Activated CD4-positive, alpha-beta memory T cell treated with anti-CD3 and anti-CD28 coated beads for 36 hours (primary cell): ENCODE measurements at regions of chr6 and their contacts with region 1.

Region 1: DNA sequence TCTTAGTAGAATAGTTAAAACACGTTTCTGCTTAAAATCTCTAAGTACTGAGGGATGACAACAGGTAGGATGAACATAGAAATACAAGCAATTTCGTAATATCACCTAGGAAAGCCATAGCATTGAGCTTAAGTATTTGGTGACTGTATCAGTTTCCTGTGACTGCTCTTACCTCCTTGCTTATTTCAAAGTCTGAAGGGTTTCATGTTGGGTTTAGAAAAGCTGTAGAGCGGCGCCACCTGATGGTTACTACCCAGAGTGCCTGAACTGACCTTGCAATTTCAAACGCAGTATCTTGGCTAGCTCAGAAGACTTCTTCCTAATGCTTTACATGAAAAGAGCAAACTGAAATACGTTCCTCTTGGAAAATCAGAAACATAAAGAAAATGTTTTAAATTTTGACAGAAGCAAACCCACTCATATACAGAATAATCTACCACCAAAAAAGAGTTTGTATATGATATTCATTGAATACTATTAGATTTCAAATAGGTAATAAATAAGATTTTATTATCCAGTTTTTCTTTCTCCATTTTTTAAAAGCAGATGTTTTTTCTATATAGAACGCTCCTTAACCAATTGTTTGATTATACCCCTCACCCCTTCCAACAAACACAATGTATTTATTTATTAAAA is 82.3 kb upstream of the RIPOR2 start:
- DNase-seq: peak; percentile 90
- H3K4me3 Mint-ChIP-seq: peak overlapping the region; percentile 42
- H3K27ac Mint-ChIP-seq: peak overlapping the region; percentile 86
- H3K4me1 Mint-ChIP-seq: peaks cover 69% of the 10 kb centered on the region
- H3K27me3 Mint-ChIP-seq: no peaks in the 10 kb centered on the region

Region 2: GRCh38 chr6:24581084-24581669 is 436.9 kb before region 1 on chr6:
- CTCF ChIA-PET with region 1: interaction called, 8 read pairs
- POLR2A ChIA-PET with region 1: no interaction called
- intact Hi-C with region 1: loop called (anchors 1 kb)
- DNase-seq: peak; percentile 85
- H3K4me3 Mint-ChIP-seq: no peak overlapping the region
- H3K27ac Mint-ChIP-seq: no peak overlapping the region
- H3K4me1 Mint-ChIP-seq: peaks cover 2% of the 10 kb centered on the region
- H3K27me3 Mint-ChIP-seq: no peaks in the 10 kb centered on the region

Region 3: DNA sequence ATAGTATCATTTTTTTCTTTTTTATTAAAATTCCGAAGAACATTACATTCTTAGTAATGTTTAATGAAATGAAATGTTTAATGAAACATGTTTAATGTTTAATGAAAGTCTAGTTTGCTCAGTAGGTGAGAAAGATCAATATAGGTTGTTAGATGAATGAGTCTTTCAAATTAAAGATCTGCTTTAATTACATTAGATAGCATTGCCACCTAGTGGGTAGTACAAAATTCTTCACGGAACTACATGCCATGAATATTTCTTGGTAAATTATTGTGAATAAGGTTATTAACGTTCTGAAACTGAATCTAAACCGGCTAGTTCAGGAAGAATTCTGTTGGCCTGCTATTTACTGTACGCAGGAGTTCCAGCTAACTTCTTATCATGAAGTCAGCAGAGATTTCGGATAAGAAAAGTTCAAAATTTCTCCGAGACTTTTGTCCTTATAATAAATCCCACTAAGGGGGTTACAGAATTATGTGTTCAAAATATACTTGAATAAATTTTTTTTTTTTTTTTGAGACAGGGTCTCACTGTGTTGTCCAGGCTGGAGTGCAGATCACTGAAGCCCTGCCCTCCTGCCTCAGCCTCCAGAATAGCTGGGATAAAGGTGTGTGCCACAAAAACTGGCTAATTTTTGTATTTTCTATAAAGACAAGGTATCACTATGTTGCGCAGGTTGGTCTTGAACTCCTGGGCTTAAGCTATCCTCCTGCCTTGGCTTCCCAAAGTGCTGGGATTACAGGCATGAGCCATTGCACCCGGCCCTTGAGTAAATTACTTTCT is 251.2 kb before region 1 on chr6:
- CTCF ChIA-PET with region 1: interaction called, 11 read pairs
- POLR2A ChIA-PET with region 1: no interaction called
- intact Hi-C with region 1: no loop called
- DNase-seq: no peak
- H3K4me3 Mint-ChIP-seq: no peak overlapping the region
- H3K27ac Mint-ChIP-seq: no peak overlapping the region
- H3K4me1 Mint-ChIP-seq: peaks cover 4% of the 10 kb centered on the region
- H3K27me3 Mint-ChIP-seq: no peaks in the 10 kb centered on the region

Region 4: DNA sequence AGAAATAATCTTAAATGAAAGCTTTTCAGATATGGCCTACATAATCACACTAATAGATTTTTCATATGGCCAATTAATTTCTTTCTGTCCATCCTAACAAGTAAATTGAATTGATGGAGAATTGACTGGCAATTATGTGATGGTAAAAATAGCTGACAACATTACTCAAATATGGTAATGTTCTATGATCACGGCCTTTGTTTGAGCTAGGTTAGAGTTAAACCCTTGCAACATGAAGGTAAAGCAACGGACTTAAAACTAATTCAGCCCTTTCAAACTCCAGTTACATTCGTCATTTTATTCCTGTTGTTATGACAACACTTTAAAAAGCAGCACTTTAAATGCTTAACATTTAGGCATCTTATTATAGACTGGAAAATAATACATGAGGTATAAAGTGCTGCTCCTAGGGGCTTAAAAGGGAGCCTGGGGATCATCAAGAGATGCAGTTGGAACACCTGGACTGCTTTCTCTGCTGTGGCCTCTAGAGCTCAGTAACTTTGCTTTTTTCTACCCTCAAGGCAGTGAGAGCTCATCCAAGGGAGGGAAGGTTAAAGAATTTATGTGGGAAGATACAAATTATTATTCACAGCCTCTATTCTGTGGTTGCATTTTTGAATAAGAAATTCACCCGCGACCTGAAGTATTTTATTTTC is 129.2 kb before region 1 on chr6:
- CTCF ChIA-PET with region 1: interaction called, 12 read pairs
- POLR2A ChIA-PET with region 1: no interaction called
- intact Hi-C with region 1: no loop called
- DNase-seq: no peak
- H3K4me3 Mint-ChIP-seq: no peak overlapping the region
- H3K27ac Mint-ChIP-seq: peak overlapping the region; percentile 77
- H3K4me1 Mint-ChIP-seq: peaks cover 84% of the 10 kb centered on the region
- H3K27me3 Mint-ChIP-seq: no peaks in the 10 kb centered on the region

Region 5: GRCh38 chr6:25006565-25007001 is 11.5 kb before region 1 on chr6:
- CTCF ChIA-PET with region 1: interaction called, 61 read pairs
- POLR2A ChIA-PET with region 1: no interaction called
- intact Hi-C with region 1: loop called (anchors 1 kb)
- DNase-seq: peak; percentile 66
- H3K4me3 Mint-ChIP-seq: peak overlapping the region; percentile 10
- H3K27ac Mint-ChIP-seq: peak overlapping the region; percentile 78
- H3K4me1 Mint-ChIP-seq: peaks cover 77% of the 10 kb centered on the region
- H3K27me3 Mint-ChIP-seq: no peaks in the 10 kb centered on the region

Region 6: DNA sequence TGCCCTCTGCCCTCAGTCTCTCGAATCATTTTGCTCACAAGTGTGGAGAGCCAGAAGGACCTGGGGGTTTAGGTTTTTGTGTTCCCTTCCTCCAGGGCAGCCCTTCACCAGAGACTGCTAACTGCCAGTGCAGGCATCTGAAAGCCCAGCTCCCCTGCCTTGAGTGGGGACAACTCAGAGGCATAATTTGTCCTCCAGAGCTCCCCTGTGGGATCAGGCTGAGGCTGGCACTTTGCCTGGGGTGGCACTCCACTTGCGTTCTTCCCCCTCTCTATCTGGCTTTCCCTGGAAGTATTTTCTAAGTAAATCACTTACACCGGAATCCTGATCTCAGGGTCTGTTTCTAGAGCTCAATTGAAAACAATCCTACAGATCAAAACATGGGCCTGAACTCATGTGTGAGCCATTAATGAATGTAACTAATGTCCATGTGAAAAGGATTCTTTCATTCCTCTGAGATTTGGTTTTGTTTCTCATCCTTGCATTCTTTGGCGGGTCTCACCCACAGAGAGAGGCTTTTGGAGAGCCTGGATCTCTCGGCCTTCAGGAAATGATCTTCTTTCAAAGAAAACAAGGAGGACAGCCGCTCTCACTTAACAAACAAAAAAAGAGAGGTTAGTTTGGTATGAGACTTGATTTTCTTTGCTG is 43.4 kb after region 1 on chr6:
- CTCF ChIA-PET with region 1: interaction called, 11 read pairs
- POLR2A ChIA-PET with region 1: no interaction called
- intact Hi-C with region 1: no loop called
- DNase-seq: no peak
- H3K4me3 Mint-ChIP-seq: no peak overlapping the region
- H3K27ac Mint-ChIP-seq: no peak overlapping the region
- H3K4me1 Mint-ChIP-seq: peaks cover 19% of the 10 kb centered on the region
- H3K27me3 Mint-ChIP-seq: no peaks in the 10 kb centered on the region

Region 7: DNA sequence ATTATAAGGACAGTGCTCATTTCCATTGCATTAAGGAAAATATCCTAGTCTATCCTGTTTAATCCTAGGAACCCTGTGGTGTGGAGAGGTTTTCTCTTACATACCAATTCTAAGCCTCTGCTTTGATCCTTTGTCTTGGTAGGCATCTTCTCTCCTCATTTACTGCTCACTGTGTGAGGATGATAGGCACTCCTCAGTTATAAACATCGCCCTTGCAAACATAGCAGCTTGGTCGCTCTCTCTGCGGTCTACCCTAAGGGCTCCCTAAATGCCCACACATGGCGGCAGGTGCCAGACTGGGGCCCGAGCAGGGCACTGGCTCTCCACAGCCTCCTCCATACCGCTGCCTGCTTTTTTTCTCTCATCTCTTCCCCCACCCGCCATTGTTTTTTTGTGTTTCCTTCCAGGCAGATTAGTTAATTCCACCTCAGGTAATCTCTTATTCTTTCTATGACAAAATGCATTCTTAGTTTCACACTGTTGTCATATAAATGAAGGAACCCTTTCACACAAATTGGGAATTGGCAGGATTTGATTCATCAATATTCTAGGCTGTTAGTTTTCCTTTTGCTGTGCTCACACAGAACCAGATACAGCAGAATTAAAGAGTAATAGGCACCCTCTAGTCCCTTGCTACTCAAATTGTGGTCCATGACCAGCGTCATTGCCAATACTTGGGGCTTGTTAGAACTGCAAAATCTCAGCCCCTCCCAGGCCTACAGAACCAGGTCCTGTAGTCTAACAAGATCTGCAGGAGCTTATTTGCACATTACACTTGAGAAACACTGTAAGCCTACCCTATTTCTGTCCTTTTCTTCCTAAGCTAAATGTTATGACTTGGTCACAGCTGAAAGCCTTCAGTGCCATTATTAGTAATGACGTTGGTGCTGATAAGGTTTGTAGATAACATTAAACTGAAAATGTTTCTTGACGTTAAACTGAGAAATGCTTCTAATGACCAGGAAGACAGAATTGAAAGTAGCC is 297.4 kb after region 1 on chr6:
- CTCF ChIA-PET with region 1: no interaction called
- POLR2A ChIA-PET with region 1: no interaction called
- intact Hi-C with region 1: no loop called
- DNase-seq: no peak
- H3K4me3 Mint-ChIP-seq: no peak overlapping the region
- H3K27ac Mint-ChIP-seq: no peak overlapping the region
- H3K4me1 Mint-ChIP-seq: peaks cover 4% of the 10 kb centered on the region
- H3K27me3 Mint-ChIP-seq: no peaks in the 10 kb centered on the region